ENCODE measurements at regions of chr3 and their contacts with region 1.

Region 1: GRCh38 chr3:42443819-42444436 is 33.5 kb upstream of the LYZL4 start:
- DNase-seq: peak; percentile 30
- ATAC-seq: peak; percentile 99
- H3K4me3 ChIP-seq: no peak overlapping the region
- H3K27ac ChIP-seq: no peak overlapping the region
- H3K4me1 ChIP-seq: no peaks in the 10 kb centered on the region; the same call in 1 of the 2 replicates
- H3K27me3 ChIP-seq: no peaks in the 10 kb centered on the region; a peak in 1 of 4 replicates
- CTCF ChIP-seq: peak; percentile 93 to 97 (median 95)
- EP300 ChIP-seq: no peak
- POLR2A ChIP-seq: no peak
- RAD21 ChIP-seq: peak; percentile 95

Region 2: GRCh38 chr3:41893977-41894376 is 550.0 kb before region 1 on chr3:
- CTCF ChIA-PET with region 1: interaction called, 5 read pairs
- POLR2A ChIA-PET with region 1: no interaction called
- RAD21 ChIA-PET with region 1: interaction called, 3 read pairs
- SMC1A ChIA-PET with region 1: interaction called, 3 read pairs
- in situ Hi-C with region 1: loop called (anchors 5 kb)
- intact Hi-C with region 1: loop called (anchors 1 kb)
- DNase-seq: no peak
- ATAC-seq: no peak
- H3K4me3 ChIP-seq: no peak overlapping the region
- H3K27ac ChIP-seq: no peak overlapping the region
- H3K4me1 ChIP-seq: no peaks in the 10 kb centered on the region
- H3K27me3 ChIP-seq: no peaks in the 10 kb centered on the region
- CTCF ChIP-seq: peak; percentile 18 to 49 (median 34); a peak in 3 of 6 replicates
- EP300 ChIP-seq: no peak
- POLR2A ChIP-seq: no peak
- RAD21 ChIP-seq: peak; percentile 70

Region 3: GRCh38 chr3:42229942-42230688 is 213.8 kb before region 1 on chr3:
- CTCF ChIA-PET with region 1: interaction called, 4 read pairs
- POLR2A ChIA-PET with region 1: no interaction called
- RAD21 ChIA-PET with region 1: interaction called, 6 read pairs
- SMC1A ChIA-PET with region 1: interaction called, 5 read pairs
- in situ Hi-C with region 1: no loop called
- intact Hi-C with region 1: loop called (anchors 5 kb)
- DNase-seq: no peak
- ATAC-seq: no peak
- H3K4me3 ChIP-seq: no peak overlapping the region
- H3K27ac ChIP-seq: no peak overlapping the region
- H3K4me1 ChIP-seq: peaks cover 3% of the 10 kb centered on the region; the same call in 1 of the 2 replicates
- H3K27me3 ChIP-seq: no peaks in the 10 kb centered on the region
- CTCF ChIP-seq: peak in 2 of 3 experiments; percentile 19 to 30; a peak in 3 of 6 replicates
- EP300 ChIP-seq: no peak
- POLR2A ChIP-seq: no peak
- RAD21 ChIP-seq: peak; percentile 53

Region 4: DNA sequence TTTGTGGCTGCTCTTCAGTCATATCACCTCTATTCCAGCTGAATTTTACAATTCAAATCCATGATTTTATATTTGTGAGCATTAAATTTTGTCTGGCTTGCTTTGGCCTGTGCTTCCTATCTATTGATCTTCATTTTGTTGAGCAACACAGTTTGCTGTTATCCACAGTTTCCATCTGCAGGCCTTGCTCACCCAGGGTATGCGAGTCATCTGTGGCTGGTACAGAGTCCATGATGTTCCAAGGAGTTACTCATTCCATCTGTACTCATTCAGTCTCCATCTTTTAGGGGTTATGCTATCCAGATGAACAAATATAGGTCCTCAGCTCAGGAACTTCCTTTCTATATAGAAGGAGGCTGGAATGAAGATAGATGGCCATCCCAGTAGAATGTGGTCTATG is 107.8 kb before region 1 on chr3:
- CTCF ChIA-PET with region 1: no interaction called
- POLR2A ChIA-PET with region 1: no interaction called
- RAD21 ChIA-PET with region 1: no interaction called
- SMC1A ChIA-PET with region 1: no interaction called
- in situ Hi-C with region 1: no loop called
- intact Hi-C with region 1: no loop called
- DNase-seq: no peak
- ATAC-seq: no peak
- H3K4me3 ChIP-seq: no peak overlapping the region
- H3K27ac ChIP-seq: no peak overlapping the region
- H3K4me1 ChIP-seq: no peaks in the 10 kb centered on the region
- H3K27me3 ChIP-seq: peaks cover 0 to 1% of the 10 kb centered on the region in 2 experiments; a peak in 1 of 4 replicates
- CTCF ChIP-seq: no peak
- EP300 ChIP-seq: no peak
- POLR2A ChIP-seq: no peak
- RAD21 ChIP-seq: no peak

Region 5: DNA sequence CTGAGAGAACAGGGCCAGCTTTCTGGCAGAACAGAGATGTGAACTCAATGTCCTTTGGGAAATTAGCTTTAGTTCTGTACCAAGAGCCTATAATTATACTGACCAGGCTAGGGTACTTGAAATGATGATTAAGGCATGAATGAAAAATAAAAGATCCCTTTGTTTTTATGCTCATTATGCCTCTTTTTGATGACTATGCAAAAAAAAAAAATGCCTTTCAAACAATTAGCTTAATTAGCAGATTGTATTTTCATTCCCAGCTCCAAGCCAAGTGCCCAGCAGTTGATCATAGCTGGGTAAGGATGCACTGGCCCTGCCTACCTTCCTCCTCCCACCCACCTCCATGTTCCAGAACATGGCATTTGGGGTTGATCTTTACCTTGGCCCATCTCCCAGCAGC is 90.3 kb before region 1 on chr3:
- CTCF ChIA-PET with region 1: interaction called, 3 read pairs
- POLR2A ChIA-PET with region 1: interaction called, 11 read pairs
- RAD21 ChIA-PET with region 1: no interaction called
- SMC1A ChIA-PET with region 1: no interaction called
- in situ Hi-C with region 1: no loop called
- intact Hi-C with region 1: no loop called
- DNase-seq: no peak
- ATAC-seq: no peak
- H3K4me3 ChIP-seq: no peak overlapping the region
- H3K27ac ChIP-seq: no peak overlapping the region
- H3K4me1 ChIP-seq: no peaks in the 10 kb centered on the region
- H3K27me3 ChIP-seq: no peaks in the 10 kb centered on the region; a peak in 1 of 4 replicates
- CTCF ChIP-seq: no peak
- EP300 ChIP-seq: no peak
- POLR2A ChIP-seq: no peak
- RAD21 ChIP-seq: no peak

Region 6: DNA sequence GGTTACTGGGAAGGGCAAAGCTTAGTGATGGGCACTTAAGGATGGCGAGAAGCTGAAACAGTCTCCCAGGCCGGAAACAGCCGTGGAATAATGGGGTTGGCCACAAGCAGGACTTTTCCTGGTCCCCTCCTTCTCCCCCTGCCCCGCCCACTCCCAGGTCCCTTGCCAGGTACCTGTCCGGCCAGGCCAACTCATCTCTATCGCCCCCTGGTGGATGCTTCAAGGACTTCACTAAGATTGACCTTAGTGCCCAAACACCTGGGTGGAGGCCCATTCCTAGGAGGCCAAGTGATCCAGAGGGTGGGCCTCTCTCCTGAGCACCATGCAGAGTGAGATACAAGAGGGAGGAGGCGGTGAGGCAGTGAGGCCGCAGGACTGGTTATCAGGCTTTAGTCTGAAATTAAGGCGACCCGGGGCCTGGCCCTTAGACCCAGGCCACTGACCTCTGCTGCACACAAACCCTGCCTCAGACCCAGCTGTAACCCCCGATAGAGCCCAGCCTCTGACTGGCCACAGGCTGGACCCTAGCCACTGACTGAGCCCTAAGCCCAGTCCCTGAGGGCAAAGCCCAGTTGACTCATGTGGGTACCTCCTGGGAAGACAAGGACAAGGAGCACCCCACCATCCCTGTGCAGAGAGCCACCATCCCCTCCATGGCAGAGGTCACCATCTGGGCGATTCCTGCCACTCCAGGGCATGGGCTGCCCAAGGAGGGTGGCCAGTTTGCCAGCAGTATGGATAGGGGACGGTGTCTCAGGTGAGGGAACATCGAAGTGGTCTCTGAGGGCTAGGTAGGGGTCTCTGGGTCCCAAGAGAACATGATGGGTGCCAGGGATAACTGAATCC is 96.2 kb after region 1 on chr3:
- CTCF ChIA-PET with region 1: interaction called, 4 read pairs
- POLR2A ChIA-PET with region 1: no interaction called
- RAD21 ChIA-PET with region 1: no interaction called
- SMC1A ChIA-PET with region 1: no interaction called
- in situ Hi-C with region 1: no loop called
- intact Hi-C with region 1: loop called (anchors 5 kb)
- DNase-seq: no peak
- ATAC-seq: peak; percentile 93
- H3K4me3 ChIP-seq: no peak overlapping the region
- H3K27ac ChIP-seq: no peak overlapping the region
- H3K4me1 ChIP-seq: no peaks in the 10 kb centered on the region
- H3K27me3 ChIP-seq: no peaks in the 10 kb centered on the region
- CTCF ChIP-seq: peak; percentile 65 to 88 (median 79)
- EP300 ChIP-seq: no peak
- POLR2A ChIP-seq: no peak
- RAD21 ChIP-seq: peak; percentile 48; the same call in 1 of the 2 replicates

Region 7: DNA sequence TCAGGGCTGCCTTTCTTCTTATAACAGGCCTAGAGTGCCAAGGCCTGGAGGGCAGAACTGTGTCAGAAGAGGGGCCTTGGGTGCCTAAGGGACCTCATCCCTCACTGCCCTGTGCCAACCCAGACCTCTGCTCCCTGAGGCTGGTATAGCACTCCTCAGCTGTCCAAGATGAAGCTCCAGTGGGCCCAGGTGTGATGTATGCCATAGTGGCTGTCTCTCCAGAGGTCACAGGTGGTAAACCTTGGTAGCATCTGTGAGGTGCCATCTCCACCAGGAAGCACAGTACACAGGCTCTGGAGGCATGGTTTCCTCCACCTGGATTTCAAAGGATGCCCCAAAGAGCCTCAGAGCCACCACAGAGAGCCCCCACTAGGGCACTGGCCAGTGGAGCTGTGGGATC is 229.2 kb after region 1 on chr3:
- CTCF ChIA-PET with region 1: no interaction called
- POLR2A ChIA-PET with region 1: no interaction called
- RAD21 ChIA-PET with region 1: no interaction called
- SMC1A ChIA-PET with region 1: no interaction called
- in situ Hi-C with region 1: no loop called
- intact Hi-C with region 1: no loop called
- DNase-seq: no peak
- ATAC-seq: no peak
- H3K4me3 ChIP-seq: no peak overlapping the region
- H3K27ac ChIP-seq: no peak overlapping the region
- H3K4me1 ChIP-seq: no peaks in the 10 kb centered on the region
- H3K27me3 ChIP-seq: no peaks in the 10 kb centered on the region
- CTCF ChIP-seq: no peak
- EP300 ChIP-seq: no peak
- POLR2A ChIP-seq: no peak
- RAD21 ChIP-seq: no peak

Measured in GM12878 (cell line).